ENCODE measurements at regions of chr17 and their contacts with region 1.

Region 1: DNA sequence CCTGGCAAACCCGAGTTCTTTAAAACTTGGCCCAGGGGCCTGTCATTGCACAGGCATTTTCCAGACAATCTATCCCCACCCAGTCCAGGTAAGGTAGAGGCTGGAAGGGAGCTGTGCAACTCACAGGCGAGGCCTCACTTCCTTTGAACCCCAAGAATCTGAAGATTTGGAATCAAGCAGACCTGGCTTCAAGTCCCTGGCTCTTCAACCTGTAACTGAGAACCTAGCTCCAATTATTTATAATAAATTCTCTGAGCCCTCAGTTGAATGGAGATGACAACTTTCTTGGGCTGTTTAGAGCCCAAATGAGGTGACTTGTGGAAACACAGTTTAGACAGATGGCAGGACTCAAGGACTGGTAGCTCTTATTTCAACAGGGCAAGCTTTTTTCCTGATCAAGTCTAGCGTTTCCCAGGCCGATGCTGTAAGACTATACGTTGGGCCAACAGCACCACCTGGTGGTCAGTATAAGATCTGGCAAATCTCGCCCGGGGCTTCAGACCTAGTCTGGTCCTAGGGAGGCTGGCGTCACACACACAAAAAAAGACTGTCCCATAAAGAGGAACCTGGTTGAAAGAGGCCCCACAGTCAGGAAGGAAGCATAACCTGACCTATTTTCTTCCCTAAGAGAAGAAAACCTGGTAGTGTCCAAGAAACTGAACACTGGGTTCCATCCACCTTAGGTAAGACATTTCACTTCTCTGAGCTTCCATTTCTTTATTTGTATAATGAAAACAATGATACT is 117.9 kb downstream of the C17orf67 start:
- DNase-seq: peak; percentile 79
- CTCF ChIP-seq: peak; percentile 88

Region 2: DNA sequence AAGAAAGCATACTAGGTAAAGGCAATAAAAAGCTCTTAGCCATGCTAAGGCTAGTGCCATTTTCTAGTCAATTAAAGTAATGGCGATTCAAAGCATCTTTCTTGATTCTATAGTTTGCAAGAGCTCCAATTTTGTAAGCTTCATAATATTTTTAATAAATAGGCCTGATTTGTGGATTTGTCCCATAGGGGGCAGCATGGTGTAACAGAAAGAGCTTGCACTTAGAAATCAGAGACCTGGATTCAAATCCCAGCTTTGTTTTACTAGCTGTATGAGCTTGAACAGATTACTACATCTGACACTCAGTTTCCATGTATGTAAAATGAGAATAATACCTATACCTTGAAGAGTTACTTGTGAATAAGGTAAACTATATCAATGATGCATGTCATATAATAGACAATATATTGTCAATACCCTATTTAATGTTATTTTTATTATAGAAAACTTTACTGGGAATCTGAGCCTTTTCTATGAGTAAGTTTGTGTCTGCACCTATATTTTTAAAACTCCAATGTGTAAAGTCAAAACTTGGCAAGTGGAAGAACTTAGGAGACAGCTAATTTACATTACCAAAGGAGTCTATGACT is 215.9 kb before region 1 on chr17:
- CTCF ChIA-PET with region 1: interaction called, 19 read pairs
- POLR2A ChIA-PET with region 1: no interaction called
- DNase-seq: no peak
- CTCF ChIP-seq: peak; percentile 29

Region 3: DNA sequence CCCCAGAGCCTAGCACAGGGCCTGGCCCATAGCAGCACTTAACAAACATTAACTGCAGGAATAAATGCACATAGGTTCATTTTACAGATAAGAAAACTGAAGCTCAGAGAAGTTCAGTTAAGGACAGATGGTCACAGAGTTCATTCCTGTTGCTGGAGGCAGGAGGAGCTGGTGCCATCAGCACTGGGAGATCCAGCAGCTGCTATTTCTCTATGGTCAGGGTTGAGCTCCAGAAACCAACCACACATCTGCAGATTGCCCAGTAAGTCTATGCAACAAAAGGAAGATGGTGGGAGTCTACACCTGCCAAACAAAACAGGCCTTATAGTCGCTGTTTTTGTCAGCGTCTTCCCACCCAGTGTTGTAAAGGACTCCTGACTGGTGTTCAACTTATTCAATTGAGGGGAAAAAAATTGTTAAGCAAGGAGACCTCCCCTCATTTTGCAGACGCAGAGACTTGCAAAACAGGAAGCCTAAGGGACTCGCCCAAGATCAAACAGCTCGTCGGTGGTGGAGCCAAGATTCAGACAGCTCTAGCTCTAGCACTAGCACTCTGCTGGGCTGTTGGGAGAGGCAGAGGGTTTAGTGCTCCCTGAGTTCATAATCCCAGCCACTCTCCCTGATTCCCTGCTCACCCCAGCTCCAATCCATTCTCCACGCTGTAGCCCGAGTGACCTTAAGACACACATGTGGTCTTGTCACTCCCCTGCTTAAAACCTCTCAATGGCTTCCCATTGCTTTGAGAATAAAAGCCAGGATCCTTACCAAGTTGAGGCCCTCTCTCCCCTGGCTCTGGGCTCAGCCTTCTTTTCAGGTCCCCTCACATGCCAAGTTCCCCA is 113.3 kb before region 1 on chr17:
- CTCF ChIA-PET with region 1: interaction called, 11 read pairs
- POLR2A ChIA-PET with region 1: no interaction called
- DNase-seq: no peak
- CTCF ChIP-seq: no peak

Region 4: GRCh38 chr17:56688166-56688565 is 27.6 kb before region 1 on chr17:
- CTCF ChIA-PET with region 1: interaction called, 26 read pairs
- POLR2A ChIA-PET with region 1: no interaction called
- DNase-seq: no peak
- CTCF ChIP-seq: no peak

Region 5: DNA sequence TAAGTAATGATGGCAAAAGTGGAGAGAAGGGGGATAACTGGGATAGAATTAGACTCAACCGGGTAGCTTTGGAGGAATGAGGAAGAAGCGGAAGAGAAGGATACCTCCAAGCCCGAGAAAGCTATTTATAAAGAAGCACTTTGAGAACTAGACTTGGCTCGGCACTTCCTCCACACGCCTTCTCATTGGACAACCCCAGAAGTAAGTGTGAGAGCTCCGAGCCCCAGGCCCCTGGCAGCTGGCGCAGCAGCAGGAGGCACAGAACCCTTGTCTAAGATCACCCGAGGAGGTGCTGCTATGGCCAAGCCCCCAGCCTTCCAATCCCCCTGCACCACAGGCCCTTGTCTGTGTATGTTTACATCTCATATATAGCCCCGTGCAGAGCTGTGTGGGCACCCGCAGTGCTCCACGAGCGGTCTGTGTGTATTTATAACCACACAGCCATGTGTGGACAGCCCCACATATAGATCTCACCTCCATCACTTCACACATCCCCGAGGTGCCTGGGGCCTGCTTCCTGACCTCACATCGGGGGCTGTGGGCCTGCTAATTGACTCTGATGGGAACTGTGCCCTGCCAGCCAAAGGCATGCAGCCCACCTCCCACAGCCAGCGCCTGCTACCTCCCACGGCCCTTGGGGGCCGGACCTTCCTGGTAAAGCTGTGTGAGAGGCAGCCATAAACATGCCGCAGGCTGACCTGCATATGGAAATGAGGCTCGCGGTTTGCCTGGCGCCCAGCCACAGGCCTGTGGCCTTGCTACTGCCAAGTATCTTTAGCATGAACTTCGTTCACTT is 21.8 kb after region 1 on chr17:
- CTCF ChIA-PET with region 1: interaction called, 11 read pairs
- POLR2A ChIA-PET with region 1: no interaction called
- DNase-seq: no peak
- CTCF ChIP-seq: no peak

Measured in GM10248 (cell line).